AG04450 (cell line): ENCODE measurements at regions of chr3 and their contacts with region 1.

Region 1: DNA sequence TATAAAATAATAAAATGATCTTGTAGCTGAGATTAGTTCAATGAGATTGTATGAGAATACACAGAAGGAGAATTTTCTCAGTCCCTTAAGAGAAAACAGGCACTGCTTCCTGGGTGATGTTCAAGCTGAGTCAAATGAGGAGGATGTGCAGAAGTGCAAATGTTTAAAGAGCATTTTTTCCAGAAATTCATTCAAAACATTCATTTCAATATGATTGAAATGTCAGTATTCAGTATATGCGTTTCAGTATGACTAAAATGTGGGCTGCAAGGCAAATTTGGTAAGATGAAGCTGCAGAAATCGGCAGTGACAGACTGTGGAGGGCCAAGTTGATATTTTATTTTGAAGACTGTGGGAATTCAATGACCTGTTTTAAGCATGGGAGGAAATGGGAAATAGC is 19.3 kb upstream of the PYDC2 start:
- DNase-seq: no peak
- H3K4me3 ChIP-seq: no peak overlapping the region
- H3K27ac ChIP-seq: no peak overlapping the region
- H3K27me3 ChIP-seq: no peaks in the 10 kb centered on the region
- CTCF ChIP-seq: no peak

Region 2: GRCh38 chr3:191085091-191085490 is 356.6 kb before region 1 on chr3:
- CTCF ChIA-PET with region 1: interaction called, 11 read pairs
- POLR2A ChIA-PET with region 1: no interaction called
- DNase-seq: no peak
- H3K4me3 ChIP-seq: no peak overlapping the region
- H3K27ac ChIP-seq: no peak overlapping the region
- H3K27me3 ChIP-seq: no peaks in the 10 kb centered on the region
- CTCF ChIP-seq: no peak

Region 3: DNA sequence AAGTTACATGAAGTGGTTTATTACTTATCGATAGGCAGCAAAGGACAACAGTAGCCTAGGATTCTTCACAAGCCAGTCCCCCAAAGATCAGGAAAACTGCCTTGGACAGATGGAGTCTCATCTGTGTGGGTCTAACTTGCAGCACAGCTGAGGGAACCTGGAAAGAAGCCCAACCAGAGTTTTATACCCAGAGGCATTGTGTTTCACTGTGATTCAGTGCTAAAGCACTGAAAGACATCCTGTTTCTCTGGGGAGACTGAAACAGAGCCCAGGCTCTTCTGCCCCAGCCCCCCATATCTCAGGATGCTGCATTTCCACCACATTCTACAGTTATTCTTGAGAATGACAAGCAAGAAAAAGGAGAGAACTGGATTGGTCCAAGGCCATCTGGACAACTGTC is 28.9 kb before region 1 on chr3:
- CTCF ChIA-PET with region 1: no interaction called
- POLR2A ChIA-PET with region 1: no interaction called
- DNase-seq: peak; percentile 86
- H3K4me3 ChIP-seq: no peak overlapping the region
- H3K27ac ChIP-seq: no peak overlapping the region
- H3K27me3 ChIP-seq: no peaks in the 10 kb centered on the region
- CTCF ChIP-seq: no peak